Naive thymus-derived CD4-positive, alpha-beta T cell (primary cell): ENCODE measurements at regions of chr12 and their contacts with region 1.

Region 1: GRCh38 chr12:4857472-4858291 is 52.0 kb upstream of the KCNA1 start:
- DNase-seq: peak; percentile 35 to 73 (median 62)
- ATAC-seq: peak; percentile 81
- H3K4me3 ChIP-seq: peak overlapping the region; percentile 44
- H3K4me3 Mint-ChIP-seq: peak overlapping the region; percentile 69 to 86 (median 80)
- H3K27ac ChIP-seq: no peak overlapping the region
- H3K27ac Mint-ChIP-seq: no peak overlapping the region
- H3K4me1 ChIP-seq: peaks cover 0 to 10% of the 10 kb centered on the region in 2 donors
- H3K4me1 Mint-ChIP-seq: peaks cover 8 to 28% (median 11%) of the 10 kb centered on the region in 7 donors
- H3K27me3 ChIP-seq: no peaks in the 10 kb centered on the region
- H3K27me3 Mint-ChIP-seq: peaks cover 7 to 44% (median 18%) of the 10 kb centered on the region in 5 donors

Region 2: DNA sequence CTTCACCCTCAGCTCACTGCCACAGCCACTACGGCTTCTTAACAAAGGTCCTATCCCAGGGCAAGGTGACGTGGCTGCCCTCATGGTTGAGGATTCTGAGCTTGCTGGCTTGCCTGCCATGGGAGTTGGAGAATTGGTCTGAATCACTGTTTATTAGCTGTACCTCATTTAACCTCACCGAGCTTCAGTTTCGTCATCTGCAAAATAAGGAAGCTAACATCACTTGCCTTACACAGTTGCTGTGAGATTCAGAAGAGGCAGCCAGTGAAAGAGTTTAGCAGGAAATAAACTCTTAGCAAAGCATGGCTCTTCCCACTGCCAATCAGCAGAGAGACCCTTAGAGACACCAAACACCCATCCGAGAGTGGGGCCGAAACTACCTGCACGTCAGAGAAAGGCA is 38.0 kb before region 1 on chr12:
- CTCF ChIA-PET with region 1: no interaction called
- POLR2A ChIA-PET with region 1: no interaction called
- intact Hi-C with region 1: loop called in 1 of 2 experiments (anchors 5 kb)
- DNase-seq: no peak
- ATAC-seq: peak; percentile 54
- H3K4me3 ChIP-seq: no peak overlapping the region
- H3K4me3 Mint-ChIP-seq: peak overlapping the region in 1 of 10 donors; percentile 17
- H3K27ac ChIP-seq: no peak overlapping the region
- H3K27ac Mint-ChIP-seq: peak overlapping the region in 1 of 9 donors; percentile 78
- H3K4me1 ChIP-seq: peaks cover 12% of the 10 kb centered on the region in 2 donors
- H3K4me1 Mint-ChIP-seq: peaks cover 14 to 41% (median 31%) of the 10 kb centered on the region in 7 donors
- H3K27me3 ChIP-seq: no peaks in the 10 kb centered on the region
- H3K27me3 Mint-ChIP-seq: peaks cover 0 to 10% (median 5%) of the 10 kb centered on the region in 5 donors

Region 3: DNA sequence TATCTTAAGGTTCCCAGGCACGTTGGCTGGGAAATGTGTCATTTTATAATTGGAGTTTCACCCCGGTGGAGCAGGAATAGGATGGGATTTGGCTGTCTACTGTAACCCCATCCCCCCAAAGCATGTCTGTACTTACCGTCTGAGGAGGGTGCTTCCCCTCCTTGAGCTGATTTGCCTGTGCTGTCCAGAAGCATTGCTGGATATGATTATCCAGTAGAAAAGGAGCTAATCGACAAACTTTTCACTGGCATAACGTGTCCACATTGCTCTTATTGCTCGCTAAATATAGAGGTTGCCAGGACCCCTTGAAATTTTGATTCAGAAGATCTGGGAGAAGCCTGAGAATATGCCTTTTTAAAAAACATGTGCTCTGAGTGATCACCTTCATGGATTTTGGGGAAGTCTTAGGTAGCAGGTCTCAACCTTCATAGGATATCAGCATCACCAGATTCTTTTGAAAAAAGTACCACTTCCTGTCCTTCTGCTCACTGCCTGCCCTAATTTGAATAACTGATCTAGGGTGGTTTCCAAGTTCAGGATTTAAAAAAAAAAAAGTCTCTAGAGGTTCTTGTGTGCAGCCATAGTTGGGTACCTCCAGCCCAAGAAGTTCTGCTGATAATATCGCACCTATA is 28.4 kb before region 1 on chr12:
- CTCF ChIA-PET with region 1: interaction called, 3 read pairs
- POLR2A ChIA-PET with region 1: no interaction called
- intact Hi-C with region 1: loop called (anchors 1 to 2 kb)
- DNase-seq: peak in 7 of 9 donors; percentile 8 to 59 (median 47)
- ATAC-seq: peak; percentile 86
- H3K4me3 ChIP-seq: peak overlapping the region; percentile 39
- H3K4me3 Mint-ChIP-seq: peak overlapping the region; percentile 16 to 89 (median 69)
- H3K27ac ChIP-seq: no peak overlapping the region
- H3K27ac Mint-ChIP-seq: peak overlapping the region; percentile 20 to 99 (median 70)
- H3K4me1 ChIP-seq: peaks cover 37 to 53% of the 10 kb centered on the region in 2 donors
- H3K4me1 Mint-ChIP-seq: peaks cover 44 to 74% (median 65%) of the 10 kb centered on the region in 7 donors
- H3K27me3 ChIP-seq: no peaks in the 10 kb centered on the region
- H3K27me3 Mint-ChIP-seq: no peaks in the 10 kb centered on the region

Region 4: DNA sequence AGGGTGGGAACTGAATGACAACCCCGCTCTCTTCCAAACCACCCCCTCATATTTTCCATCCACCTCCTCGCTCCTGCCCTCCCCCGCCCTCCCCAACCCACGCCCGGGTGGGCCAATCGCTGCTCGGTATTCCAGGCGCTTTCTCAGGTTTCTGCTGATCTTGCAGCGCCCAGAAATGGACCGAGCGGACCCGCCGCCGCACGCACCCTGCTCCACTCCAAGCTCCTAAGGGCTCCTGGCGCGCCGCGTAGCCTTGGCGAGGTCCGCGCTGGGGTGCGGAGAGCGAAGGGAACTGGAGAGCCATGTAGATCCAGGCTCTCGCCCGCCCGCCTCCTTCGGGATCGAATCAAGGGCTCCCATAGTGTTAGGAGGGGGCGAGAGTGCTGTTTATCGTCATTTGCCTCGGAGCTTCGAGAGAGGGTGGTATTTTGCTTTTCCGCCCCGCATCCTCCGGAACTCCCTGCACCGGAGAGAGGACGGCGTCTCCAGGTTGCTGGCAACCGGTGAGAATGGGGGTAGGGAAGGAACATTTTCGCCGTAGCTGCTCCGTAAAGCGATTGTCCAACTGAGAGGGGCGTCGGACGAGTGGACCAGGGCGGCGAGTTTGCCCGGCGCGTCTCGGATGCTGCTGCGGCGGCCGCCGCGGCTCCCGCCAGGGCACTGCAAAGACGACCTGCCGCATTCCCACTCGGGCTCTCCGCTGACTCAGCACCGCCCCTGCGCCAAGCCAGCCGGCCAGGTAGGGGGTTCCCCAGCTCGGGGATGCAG is 52.2 kb after region 1 on chr12 and contains the start of gene KCNA1:
- CTCF ChIA-PET with region 1: no interaction called
- POLR2A ChIA-PET with region 1: interaction called, 3 read pairs
- intact Hi-C with region 1: loop called in 1 of 2 experiments (anchors 5 kb)
- DNase-seq: peak in 1 of 9 donors; percentile 37
- ATAC-seq: no peak
- H3K4me3 ChIP-seq: peak within 1 kb of the TSS; percentile 43
- H3K4me3 Mint-ChIP-seq: peak within 1 kb of the TSS in 9 of 10 donors; percentile 78 to 94 (median 89)
- H3K27ac ChIP-seq: no peak within 1 kb of the TSS
- H3K27ac Mint-ChIP-seq: peak within 1 kb of the TSS in 1 of 9 donors; percentile 34
- H3K4me1 ChIP-seq: peaks cover 0 to 3% of the 10 kb centered on the region in 2 donors
- H3K4me1 Mint-ChIP-seq: peaks cover 7 to 20% (median 11%) of the 10 kb centered on the region in 7 donors
- H3K27me3 ChIP-seq: peaks cover 0 to 14% of the 10 kb centered on the region in 2 donors
- H3K27me3 Mint-ChIP-seq: peaks cover 29 to 57% (median 34%) of the 10 kb centered on the region in 5 donors
- total RNA-seq, gene KCNA1: not detected

Region 5: GRCh38 chr12:5003020-5003666 is 145.5 kb after region 1 on chr12:
- CTCF ChIA-PET with region 1: no interaction called
- POLR2A ChIA-PET with region 1: no interaction called
- intact Hi-C with region 1: loop called (anchors 1 to 2 kb)
- DNase-seq: peak in 2 of 9 donors; percentile 9 to 50
- ATAC-seq: peak; percentile 50
- H3K4me3 ChIP-seq: no peak overlapping the region
- H3K4me3 Mint-ChIP-seq: no peak overlapping the region
- H3K27ac ChIP-seq: no peak overlapping the region
- H3K27ac Mint-ChIP-seq: no peak overlapping the region
- H3K4me1 ChIP-seq: no peaks in the 10 kb centered on the region
- H3K4me1 Mint-ChIP-seq: no peaks in the 10 kb centered on the region
- H3K27me3 ChIP-seq: no peaks in the 10 kb centered on the region
- H3K27me3 Mint-ChIP-seq: peaks cover 12 to 26% (median 24%) of the 10 kb centered on the region in 5 donors

Region 6: GRCh38 chr12:5083955-5084849 is 226.5 kb after region 1 on chr12:
- CTCF ChIA-PET with region 1: no interaction called
- POLR2A ChIA-PET with region 1: no interaction called
- intact Hi-C with region 1: loop called (anchors 1 kb)
- DNase-seq: no peak
- ATAC-seq: no peak
- H3K4me3 ChIP-seq: no peak overlapping the region
- H3K4me3 Mint-ChIP-seq: no peak overlapping the region
- H3K27ac ChIP-seq: no peak overlapping the region
- H3K27ac Mint-ChIP-seq: no peak overlapping the region
- H3K4me1 ChIP-seq: no peaks in the 10 kb centered on the region
- H3K4me1 Mint-ChIP-seq: no peaks in the 10 kb centered on the region
- H3K27me3 ChIP-seq: no peaks in the 10 kb centered on the region
- H3K27me3 Mint-ChIP-seq: peaks cover 0 to 9% (median 0%) of the 10 kb centered on the region in 5 donors